AG04450 (cell line): ENCODE measurements at regions of chr12 and their contacts with region 1.

Region 1: GRCh38 chr12:19288603-19289244 is 150.6 kb upstream of the AEBP2 start:
- DNase-seq: no peak
- H3K4me3 ChIP-seq: no peak overlapping the region
- H3K27ac ChIP-seq: no peak overlapping the region
- H3K27me3 ChIP-seq: no peaks in the 10 kb centered on the region
- CTCF ChIP-seq: peak; percentile 67

Region 2: DNA sequence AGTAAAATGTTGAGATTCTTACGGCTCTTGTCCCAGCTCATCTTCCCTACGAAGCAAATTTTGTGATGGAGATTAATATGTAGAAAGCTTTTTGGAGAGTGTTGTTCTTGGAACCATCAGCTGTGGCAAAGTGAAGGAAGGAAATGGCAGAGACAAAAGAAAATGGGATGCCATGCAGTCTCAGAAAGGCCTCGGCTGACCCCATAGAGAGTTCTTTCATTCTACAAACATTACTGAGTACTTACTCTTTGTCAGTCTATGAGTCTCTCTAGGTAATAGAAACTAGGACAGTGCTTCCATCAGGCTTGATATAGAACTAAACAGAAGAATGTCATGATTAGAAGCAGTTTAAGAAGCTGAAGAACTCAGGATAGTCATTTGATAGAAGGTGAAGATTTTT is 25.1 kb before region 1 on chr12:
- CTCF ChIA-PET with region 1: no interaction called
- POLR2A ChIA-PET with region 1: no interaction called
- DNase-seq: no peak
- H3K4me3 ChIP-seq: no peak overlapping the region
- H3K27ac ChIP-seq: no peak overlapping the region
- H3K27me3 ChIP-seq: no peaks in the 10 kb centered on the region
- CTCF ChIP-seq: no peak

Region 3: GRCh38 chr12:19273482-19274330 is 15.0 kb before region 1 on chr12:
- CTCF ChIA-PET with region 1: interaction called, 23 read pairs
- POLR2A ChIA-PET with region 1: no interaction called
- DNase-seq: peak; percentile 86
- H3K4me3 ChIP-seq: no peak overlapping the region
- H3K27ac ChIP-seq: peak overlapping the region; percentile 33
- H3K27me3 ChIP-seq: no peaks in the 10 kb centered on the region
- CTCF ChIP-seq: no peak

Region 4: DNA sequence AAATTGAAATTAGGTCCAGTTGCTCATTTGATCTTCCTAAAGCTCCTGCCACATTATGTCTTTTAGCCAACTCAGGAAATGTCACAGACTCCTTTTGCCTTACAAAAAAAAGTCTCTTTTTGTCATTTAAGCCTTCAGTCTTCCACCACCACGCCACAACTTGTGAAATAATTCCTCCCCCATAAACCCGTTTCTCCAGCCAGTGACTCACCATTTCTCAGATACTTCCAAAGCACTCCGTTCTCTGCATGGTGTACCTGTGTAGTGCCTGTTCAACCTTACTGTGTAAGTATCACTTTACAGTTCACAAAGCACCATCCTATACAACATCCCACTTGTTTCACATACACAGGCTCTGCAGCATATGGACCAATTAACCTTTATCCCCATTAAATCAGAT is 11.0 kb after region 1 on chr12:
- CTCF ChIA-PET with region 1: interaction called, 42 read pairs
- POLR2A ChIA-PET with region 1: no interaction called
- DNase-seq: no peak
- H3K4me3 ChIP-seq: no peak overlapping the region
- H3K27ac ChIP-seq: no peak overlapping the region
- H3K27me3 ChIP-seq: no peaks in the 10 kb centered on the region
- CTCF ChIP-seq: no peak